Transverse colon (tissue), 4 donors: ENCODE measurements at regions of chr18 and their contacts with region 1.

Region 1: GRCh38 chr18:44107187-44107586 is 573.5 kb upstream of the SETBP1 start:
- DNase-seq: no peak
- H3K4me3 ChIP-seq: no peak overlapping the region
- H3K27ac ChIP-seq: no peak overlapping the region
- H3K4me1 ChIP-seq: no peaks in the 10 kb centered on the region
- H3K27me3 ChIP-seq: no peaks in the 10 kb centered on the region
- CTCF ChIP-seq: no peak
- EP300 ChIP-seq: no peak
- POLR2A ChIP-seq: no peak

Region 2: DNA sequence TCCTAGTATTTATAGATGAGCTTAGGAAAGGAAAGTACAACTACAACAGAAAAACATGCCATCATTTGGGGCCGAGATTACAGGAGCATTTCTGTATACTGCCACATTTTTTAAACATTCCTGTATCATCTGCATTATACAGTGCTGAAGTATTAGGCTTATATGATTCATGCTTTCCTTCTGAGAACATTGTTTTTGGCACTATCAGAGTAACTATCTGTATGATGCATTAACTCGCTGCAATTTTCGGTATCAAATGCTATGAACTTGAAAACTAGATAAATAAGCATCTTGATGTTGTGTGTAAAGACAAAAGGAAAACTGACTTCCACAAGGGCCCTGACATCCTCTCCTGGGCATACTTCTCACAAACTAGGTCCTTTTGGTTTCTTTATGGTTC is 1093.7 kb before region 1 on chr18:
- in situ Hi-C with region 1: no loop called
- intact Hi-C with region 1: loop called (anchors 10 kb)
- DNase-seq: no peak
- H3K4me3 ChIP-seq: no peak overlapping the region
- H3K27ac ChIP-seq: no peak overlapping the region
- H3K4me1 ChIP-seq: no peaks in the 10 kb centered on the region
- H3K27me3 ChIP-seq: no peaks in the 10 kb centered on the region
- CTCF ChIP-seq: no peak
- EP300 ChIP-seq: no peak
- POLR2A ChIP-seq: no peak

Region 3: DNA sequence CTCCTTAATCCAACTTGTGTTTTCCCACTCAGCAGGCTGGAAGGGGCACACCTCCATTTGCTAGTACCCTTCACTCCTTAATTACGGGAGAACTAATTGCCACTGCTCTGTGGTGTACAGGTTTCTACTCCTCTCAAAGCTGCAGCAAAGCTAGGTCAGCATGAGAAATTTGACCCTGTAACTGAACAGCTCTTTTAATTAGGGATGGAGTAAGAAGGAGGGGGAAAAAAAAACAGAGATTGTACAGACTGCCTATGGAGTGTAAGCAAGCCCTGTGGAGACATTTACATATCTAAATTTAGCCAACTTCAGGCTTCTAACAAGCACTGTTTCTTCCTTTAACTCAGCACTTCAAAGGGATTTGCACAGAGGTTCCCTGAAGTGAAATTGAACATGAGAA is 56.2 kb before region 1 on chr18:
- in situ Hi-C with region 1: no loop called
- intact Hi-C with region 1: no loop called
- DNase-seq: no peak
- H3K4me3 ChIP-seq: no peak overlapping the region
- H3K27ac ChIP-seq: no peak overlapping the region
- H3K4me1 ChIP-seq: no peaks in the 10 kb centered on the region
- H3K27me3 ChIP-seq: no peaks in the 10 kb centered on the region
- CTCF ChIP-seq: no peak
- EP300 ChIP-seq: no peak
- POLR2A ChIP-seq: no peak

Region 4: GRCh38 chr18:44067186-44067585 is 40.0 kb before region 1 on chr18:
- in situ Hi-C with region 1: no loop called
- intact Hi-C with region 1: no loop called
- DNase-seq: no peak
- H3K4me3 ChIP-seq: no peak overlapping the region
- H3K27ac ChIP-seq: no peak overlapping the region
- H3K4me1 ChIP-seq: no peaks in the 10 kb centered on the region
- H3K27me3 ChIP-seq: no peaks in the 10 kb centered on the region
- CTCF ChIP-seq: no peak
- EP300 ChIP-seq: no peak
- POLR2A ChIP-seq: no peak

Region 5: DNA sequence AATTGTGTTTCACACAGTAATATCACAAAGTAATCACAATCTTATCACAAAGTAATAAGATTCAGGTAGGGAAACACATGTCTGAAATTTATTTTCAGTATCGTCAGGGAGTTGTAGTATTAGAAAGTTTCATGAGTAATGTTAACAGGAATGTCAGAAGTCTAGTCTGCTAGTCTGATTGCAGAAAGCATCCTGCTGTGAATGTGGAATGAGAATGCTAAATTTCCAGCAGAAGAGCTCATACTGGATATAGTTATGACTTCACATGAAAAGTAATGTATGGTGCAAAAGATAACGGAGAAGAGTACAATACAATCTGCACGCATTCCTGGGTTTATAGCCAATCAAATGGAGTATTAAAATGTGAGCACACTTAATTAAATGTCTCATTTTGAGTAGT is 78.8 kb after region 1 on chr18:
- in situ Hi-C with region 1: no loop called
- intact Hi-C with region 1: no loop called
- DNase-seq: no peak
- H3K4me3 ChIP-seq: no peak overlapping the region
- H3K27ac ChIP-seq: no peak overlapping the region
- H3K4me1 ChIP-seq: no peaks in the 10 kb centered on the region
- H3K27me3 ChIP-seq: no peaks in the 10 kb centered on the region
- CTCF ChIP-seq: no peak
- EP300 ChIP-seq: no peak
- POLR2A ChIP-seq: no peak